Naive thymus-derived CD4-positive, alpha-beta T cell (primary cell): ENCODE measurements at regions of chr19 and their contacts with region 1.

Region 1: GRCh38 chr19:9309139-9309973 is at the start of gene ZNF699:
- DNase-seq: peak; percentile 94 to 100 (median 97)
- ATAC-seq: peak; percentile 94
- H3K4me3 ChIP-seq: peak within 1 kb of the TSS; percentile 95
- H3K4me3 Mint-ChIP-seq: peak within 1 kb of the TSS; percentile 89 to 98 (median 96)
- H3K27ac ChIP-seq: peak within 1 kb of the TSS; percentile 98
- H3K27ac Mint-ChIP-seq: peak within 1 kb of the TSS; percentile 89 to 99 (median 97)
- H3K4me1 ChIP-seq: peaks cover 6 to 15% of the 10 kb centered on the region in 2 donors
- H3K4me1 Mint-ChIP-seq: peaks cover 4 to 37% (median 24%) of the 10 kb centered on the region in 7 donors
- H3K27me3 ChIP-seq: no peaks in the 10 kb centered on the region
- H3K27me3 Mint-ChIP-seq: peaks cover 0 to 2% (median 0%) of the 10 kb centered on the region in 5 donors
- total RNA-seq, gene ZNF699: 9.1 to 19.1 (median 15.5) TPM

Region 2: DNA sequence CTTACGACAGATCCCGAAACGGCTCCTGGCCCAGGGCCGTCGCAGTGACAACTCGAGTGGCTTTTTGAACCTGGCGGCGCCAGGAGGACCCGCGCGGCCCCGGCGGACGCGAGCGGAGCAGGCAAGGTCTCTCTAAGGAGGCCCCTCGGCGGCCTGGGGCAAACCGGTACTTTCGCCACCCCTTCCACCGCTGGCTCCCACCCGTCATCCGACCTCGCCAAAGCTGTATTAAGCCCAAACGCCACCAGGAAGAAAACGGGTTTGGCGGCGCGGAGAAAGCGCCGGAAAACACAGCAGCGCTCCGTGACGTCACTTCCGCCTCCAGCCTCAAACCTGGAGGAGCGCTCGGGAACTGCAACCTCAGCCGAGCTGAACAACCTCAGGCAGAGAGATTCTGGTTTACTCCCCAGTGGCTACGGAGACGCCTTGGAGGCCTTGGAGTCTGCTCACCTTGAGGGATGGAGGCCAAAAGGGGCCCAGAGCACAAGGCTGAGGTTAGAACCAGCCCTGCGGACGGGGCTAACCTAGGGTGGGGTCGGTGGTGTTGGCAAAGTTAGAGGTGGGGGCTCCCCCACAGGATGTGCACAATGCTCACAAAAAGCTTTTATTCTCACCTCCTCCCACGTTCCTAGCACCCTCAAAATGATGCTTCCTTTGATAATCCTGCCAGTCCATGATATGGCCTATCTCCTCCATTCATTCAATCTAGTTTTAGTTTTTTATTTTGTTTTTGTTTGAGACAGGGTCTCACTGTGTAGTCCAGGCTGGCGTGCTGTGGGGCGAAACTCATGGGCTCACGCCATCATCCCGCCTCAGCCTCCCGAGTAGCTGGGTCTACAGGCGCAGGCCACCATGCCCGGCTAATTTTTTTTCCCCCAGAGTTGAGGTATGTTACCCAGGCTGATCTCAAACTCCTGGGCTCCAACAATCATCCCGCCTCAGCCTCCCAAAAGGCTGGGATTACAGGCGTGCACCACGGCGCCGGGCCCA is 126.2 kb after region 1 on chr19 and contains the start of gene ZNF266:
- CTCF ChIA-PET with region 1: no interaction called
- POLR2A ChIA-PET with region 1: interaction called, 4 read pairs
- intact Hi-C with region 1: loop called (anchors 1 kb)
- DNase-seq: peak; percentile 82 to 93 (median 91)
- ATAC-seq: peak; percentile 92
- H3K4me3 ChIP-seq: peak within 1 kb of the TSS; percentile 73
- H3K4me3 Mint-ChIP-seq: peak within 1 kb of the TSS; percentile 89 to 97 (median 93)
- H3K27ac ChIP-seq: peak within 1 kb of the TSS; percentile 94
- H3K27ac Mint-ChIP-seq: peak within 1 kb of the TSS; percentile 95 to 99 (median 98)
- H3K4me1 ChIP-seq: peaks cover 26 to 27% of the 10 kb centered on the region in 2 donors
- H3K4me1 Mint-ChIP-seq: peaks cover 20 to 54% (median 48%) of the 10 kb centered on the region in 7 donors
- H3K27me3 ChIP-seq: no peaks in the 10 kb centered on the region
- H3K27me3 Mint-ChIP-seq: no peaks in the 10 kb centered on the region
- total RNA-seq, gene ZNF266: 34.0 to 73.9 (median 55.0) TPM

Region 3: GRCh38 chr19:9538183-9539058 is 229.1 kb after region 1 on chr19 and contains the start of gene ZNF426:
- CTCF ChIA-PET with region 1: no interaction called
- POLR2A ChIA-PET with region 1: no interaction called
- intact Hi-C with region 1: loop called (anchors 1 to 2 kb)
- DNase-seq: peak; percentile 76 to 90 (median 85)
- ATAC-seq: peak; percentile 96
- H3K4me3 ChIP-seq: peak within 1 kb of the TSS; percentile 93
- H3K4me3 Mint-ChIP-seq: peak within 1 kb of the TSS; percentile 89 to 99 (median 98)
- H3K27ac ChIP-seq: peak within 1 kb of the TSS; percentile 90
- H3K27ac Mint-ChIP-seq: peak within 1 kb of the TSS; percentile 95 to 100 (median 97)
- H3K4me1 ChIP-seq: peaks cover 0 to 7% of the 10 kb centered on the region in 2 donors
- H3K4me1 Mint-ChIP-seq: peaks cover 14 to 46% (median 33%) of the 10 kb centered on the region in 7 donors
- H3K27me3 ChIP-seq: no peaks in the 10 kb centered on the region
- H3K27me3 Mint-ChIP-seq: no peaks in the 10 kb centered on the region
- total RNA-seq, gene ZNF426: 11.2 to 22.6 (median 15.8) TPM

Region 4: GRCh38 chr19:9785367-9786331 is 476.3 kb after region 1 on chr19:
- CTCF ChIA-PET with region 1: no interaction called
- POLR2A ChIA-PET with region 1: no interaction called
- intact Hi-C with region 1: loop called in 1 of 2 experiments (anchors 1 kb)
- DNase-seq: peak; percentile 81 to 97 (median 92)
- ATAC-seq: peak; percentile 92
- H3K4me3 ChIP-seq: peak overlapping the region; percentile 86
- H3K4me3 Mint-ChIP-seq: peak overlapping the region; percentile 73 to 95 (median 88)
- H3K27ac ChIP-seq: peak overlapping the region; percentile 80
- H3K27ac Mint-ChIP-seq: peak overlapping the region; percentile 83 to 99 (median 94)
- H3K4me1 ChIP-seq: peaks cover 5 to 9% of the 10 kb centered on the region in 2 donors
- H3K4me1 Mint-ChIP-seq: peaks cover 10 to 37% (median 27%) of the 10 kb centered on the region in 7 donors
- H3K27me3 ChIP-seq: no peaks in the 10 kb centered on the region
- H3K27me3 Mint-ChIP-seq: no peaks in the 10 kb centered on the region